Activated B cell treated with CpG ODN at 0.5 μM for 24 hours (primary cell): ENCODE measurements at regions of chr1 and their contacts with region 1.

Region 1: DNA sequence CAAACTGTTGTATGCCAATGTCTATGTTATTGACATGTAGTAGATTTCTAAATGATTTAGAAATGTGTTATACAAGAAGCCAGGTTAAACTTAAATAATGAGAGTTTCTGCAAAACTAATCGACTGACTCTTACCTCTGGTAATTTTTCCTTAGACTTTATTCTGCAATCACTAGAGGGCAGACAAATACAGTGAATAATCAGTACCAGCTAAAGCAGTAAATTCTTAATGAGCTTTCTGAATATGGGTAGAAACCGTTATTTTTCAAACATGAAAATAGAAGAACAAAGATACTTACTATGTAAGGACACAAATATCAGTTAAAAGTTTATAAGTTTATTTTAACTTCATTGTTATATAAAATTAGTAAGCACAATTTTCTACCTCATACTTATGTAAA is 97.9 kb upstream of the RGS1 start:
- DNase-seq: no peak
- ATAC-seq: peak; percentile 75
- H3K4me3 Mint-ChIP-seq: no peak overlapping the region
- H3K27ac Mint-ChIP-seq: no peak overlapping the region
- H3K4me1 Mint-ChIP-seq: no peaks in the 10 kb centered on the region
- H3K27me3 Mint-ChIP-seq: peaks cover 7% of the 10 kb centered on the region
- CTCF ChIP-seq: peak; percentile 26

Region 2: GRCh38 chr1:192506741-192507155 is 29.1 kb after region 1 on chr1:
- CTCF ChIA-PET with region 1: interaction called, 4 read pairs
- POLR2A ChIA-PET with region 1: interaction called, 3 read pairs
- intact Hi-C with region 1: loop called (anchors 1 kb)
- DNase-seq: no peak
- ATAC-seq: peak; percentile 79
- H3K4me3 Mint-ChIP-seq: no peak overlapping the region
- H3K27ac Mint-ChIP-seq: no peak overlapping the region
- H3K4me1 Mint-ChIP-seq: peaks cover 5% of the 10 kb centered on the region
- H3K27me3 Mint-ChIP-seq: peaks cover 8% of the 10 kb centered on the region
- CTCF ChIP-seq: no peak

Region 3: DNA sequence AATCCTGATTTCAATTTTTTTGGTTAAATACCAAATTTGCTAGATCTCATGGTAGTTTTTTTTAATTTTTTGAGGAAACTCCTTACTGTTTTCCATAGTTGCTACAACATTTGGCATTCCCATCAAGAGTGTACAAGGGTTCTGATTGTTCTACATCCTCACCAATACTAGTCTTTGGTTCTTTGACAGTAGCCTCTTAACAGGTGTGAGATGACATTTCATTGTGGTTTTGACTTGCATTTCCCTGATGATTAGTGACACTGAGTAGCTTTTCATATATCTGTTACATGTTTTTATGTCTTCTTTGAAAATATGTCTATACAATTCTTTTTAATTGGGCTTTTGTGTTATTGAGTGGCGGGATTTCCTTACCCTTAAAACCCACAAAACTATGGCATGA is 137.4 kb after region 1 on chr1:
- CTCF ChIA-PET with region 1: interaction called, 106 read pairs
- POLR2A ChIA-PET with region 1: no interaction called
- intact Hi-C with region 1: no loop called
- DNase-seq: no peak
- ATAC-seq: no peak
- H3K4me3 Mint-ChIP-seq: no peak overlapping the region
- H3K27ac Mint-ChIP-seq: no peak overlapping the region
- H3K4me1 Mint-ChIP-seq: no peaks in the 10 kb centered on the region
- H3K27me3 Mint-ChIP-seq: peaks cover 21% of the 10 kb centered on the region
- CTCF ChIP-seq: no peak

Region 4: DNA sequence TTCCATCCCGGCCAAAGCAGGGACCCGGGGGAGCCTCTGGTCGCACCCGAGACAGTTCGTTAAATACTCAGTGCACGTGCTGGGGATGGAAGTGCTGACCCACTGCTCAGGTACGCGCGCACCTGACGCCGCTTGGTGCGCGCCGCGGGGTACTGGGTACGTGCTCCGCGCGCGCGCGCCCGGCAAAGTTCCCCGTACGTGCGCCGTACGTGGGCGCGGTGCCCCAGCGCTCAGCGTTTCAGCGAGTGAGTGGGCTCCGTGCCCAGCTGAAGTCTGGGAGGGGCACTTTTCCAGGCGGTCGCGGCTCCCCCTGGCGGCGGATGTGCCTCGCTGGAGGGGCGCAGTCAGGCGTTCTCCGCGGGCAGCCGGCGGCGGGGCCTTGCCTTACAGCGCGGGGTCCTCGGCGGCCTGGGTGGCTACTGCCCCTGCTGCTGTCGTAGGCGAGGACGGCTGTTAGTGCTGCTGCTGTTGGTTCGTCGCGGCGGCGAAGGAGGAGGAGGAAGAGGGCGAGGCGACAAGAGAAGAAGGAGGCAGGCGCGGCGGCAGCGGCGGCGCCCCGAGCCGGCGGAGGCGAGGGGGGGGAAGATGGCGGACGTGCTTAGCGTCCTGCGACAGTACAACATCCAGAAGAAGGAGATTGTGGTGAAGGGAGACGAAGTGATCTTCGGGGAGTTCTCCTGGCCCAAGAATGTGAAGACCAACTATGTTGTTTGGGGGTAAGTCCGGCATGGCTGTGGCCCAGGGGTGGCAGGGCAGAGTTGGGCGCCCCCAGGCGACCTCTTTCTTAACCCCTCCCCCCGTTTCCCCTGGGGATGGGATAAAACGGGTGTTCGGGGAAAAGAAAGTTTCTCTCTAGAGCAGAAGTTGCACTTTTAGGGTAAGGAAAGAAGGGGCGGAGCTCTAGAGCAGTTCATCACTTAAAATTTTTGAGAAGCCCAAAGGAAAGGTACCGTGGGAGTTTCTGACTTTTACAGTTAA is 644.3 kb after region 1 on chr1 and contains the start of gene CDC73:
- CTCF ChIA-PET with region 1: interaction called, 5 read pairs
- POLR2A ChIA-PET with region 1: interaction called, 3 read pairs
- intact Hi-C with region 1: loop called (anchors 1 kb)
- DNase-seq: peak; percentile 99
- ATAC-seq: peak; percentile 90
- H3K4me3 Mint-ChIP-seq: peak within 1 kb of the TSS; percentile 93
- H3K27ac Mint-ChIP-seq: peak within 1 kb of the TSS; percentile 94
- H3K4me1 Mint-ChIP-seq: peaks cover 43% of the 10 kb centered on the region
- H3K27me3 Mint-ChIP-seq: no peaks in the 10 kb centered on the region
- CTCF ChIP-seq: peak; percentile 17
- total RNA-seq, gene CDC73: 55.9 and 59.1 TPM in 2 replicates

Region 5: GRCh38 chr1:193754732-193755427 is 1277.2 kb after region 1 on chr1:
- CTCF ChIA-PET with region 1: no interaction called
- POLR2A ChIA-PET with region 1: no interaction called
- intact Hi-C with region 1: loop called (anchors 10 kb)
- DNase-seq: no peak
- ATAC-seq: no peak
- H3K4me3 Mint-ChIP-seq: no peak overlapping the region
- H3K27ac Mint-ChIP-seq: no peak overlapping the region
- H3K4me1 Mint-ChIP-seq: no peaks in the 10 kb centered on the region
- H3K27me3 Mint-ChIP-seq: no peaks in the 10 kb centered on the region
- CTCF ChIP-seq: no peak